ENCODE measurements at regions of chr11 and their contacts with region 1.

Region 1: DNA sequence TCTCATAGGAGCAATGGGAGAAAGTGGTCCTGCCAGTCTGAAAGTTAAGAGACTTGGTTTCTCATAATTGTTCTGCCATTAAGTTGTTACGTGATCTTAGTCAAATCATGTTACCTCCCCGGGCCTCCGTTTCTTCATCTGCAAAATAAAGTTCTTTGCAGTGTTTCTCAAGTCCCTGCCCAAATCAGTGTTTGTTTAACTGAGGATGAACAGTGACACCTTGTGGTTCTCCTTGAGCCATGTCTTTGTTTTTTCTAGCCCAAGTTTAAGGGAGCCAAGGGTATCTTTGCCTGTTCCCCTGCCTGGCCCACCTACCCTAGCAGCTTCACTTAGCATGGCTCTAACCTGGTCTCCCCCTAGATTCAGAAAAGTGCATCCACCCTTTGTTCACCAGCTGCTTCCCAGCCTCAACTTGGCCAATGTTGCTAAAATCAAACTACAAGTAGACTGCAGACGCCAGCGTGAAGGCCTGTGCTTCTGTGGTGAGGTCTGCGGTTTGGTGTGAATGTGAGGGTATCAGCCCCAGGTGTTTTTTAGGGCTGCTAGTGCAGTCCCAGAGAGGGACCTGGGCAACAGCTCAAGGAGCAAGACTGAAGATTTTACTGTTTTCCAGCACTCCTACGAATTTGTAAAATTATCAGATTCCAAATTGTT is 35.5 kb downstream of the FZD4 start:
- DNase-seq: peak in 2 of 5 donors; percentile 6 to 11
- H3K4me3 ChIP-seq: no peak overlapping the region
- H3K4me3 Mint-ChIP-seq: no peak overlapping the region
- H3K27ac ChIP-seq: no peak overlapping the region
- H3K27ac Mint-ChIP-seq: no peak overlapping the region
- H3K4me1 ChIP-seq: peaks cover 6% of the 10 kb centered on the region
- H3K4me1 Mint-ChIP-seq: peaks cover 0 to 8% (median 1%) of the 10 kb centered on the region in 4 donors
- H3K27me3 ChIP-seq: no peaks in the 10 kb centered on the region
- H3K27me3 Mint-ChIP-seq: no peaks in the 10 kb centered on the region

Region 2: DNA sequence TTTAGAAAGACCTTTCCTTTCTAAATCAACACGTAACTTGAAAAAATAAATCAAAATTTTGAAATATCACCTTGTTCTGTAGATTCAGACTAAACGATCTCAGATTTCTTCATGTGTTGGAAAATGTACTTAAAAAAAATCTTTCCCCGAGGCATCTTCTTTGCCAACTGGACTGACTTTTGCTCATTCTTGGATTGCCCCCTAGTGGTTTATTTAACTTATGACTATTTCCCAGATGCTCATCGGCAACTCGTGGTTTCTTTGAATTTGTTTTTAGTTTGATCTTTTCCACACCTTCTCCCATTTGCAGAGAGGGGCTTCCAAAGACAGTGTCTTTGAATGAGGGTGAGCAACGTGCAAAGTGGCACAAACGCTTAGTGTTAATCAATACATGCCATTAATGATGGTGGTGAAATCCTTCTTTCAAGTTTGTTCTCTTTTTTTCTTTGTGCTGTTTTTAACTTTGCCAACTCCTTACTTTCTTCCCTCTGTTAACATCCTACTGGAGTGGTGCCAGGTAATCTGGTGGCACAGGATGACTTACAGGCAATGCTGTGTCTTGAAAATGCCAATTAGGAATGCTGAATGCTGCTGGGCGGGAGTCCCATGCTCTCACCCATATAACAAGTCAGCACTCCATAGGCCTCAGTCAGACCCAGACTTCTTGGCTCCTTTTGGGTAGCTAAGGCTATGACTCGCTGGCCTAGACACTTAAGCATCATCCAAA is 101.1 kb before region 1 on chr11:
- CTCF ChIA-PET with region 1: no interaction called
- POLR2A ChIA-PET with region 1: no interaction called
- intact Hi-C with region 1: no loop called
- DNase-seq: peak in 4 of 5 donors; percentile 31 to 47 (median 40)
- H3K4me3 ChIP-seq: no peak overlapping the region
- H3K4me3 Mint-ChIP-seq: no peak overlapping the region
- H3K27ac ChIP-seq: no peak overlapping the region
- H3K27ac Mint-ChIP-seq: no peak overlapping the region
- H3K4me1 ChIP-seq: no peaks in the 10 kb centered on the region
- H3K4me1 Mint-ChIP-seq: peaks cover 0 to 3% (median 1%) of the 10 kb centered on the region in 4 donors
- H3K27me3 ChIP-seq: no peaks in the 10 kb centered on the region
- H3K27me3 Mint-ChIP-seq: peaks cover 3 to 15% of the 10 kb centered on the region in 2 donors

Region 3: GRCh38 chr11:86869966-86870570 is 49.6 kb before region 1 on chr11:
- CTCF ChIA-PET with region 1: interaction called, 8 read pairs
- POLR2A ChIA-PET with region 1: no interaction called
- intact Hi-C with region 1: loop called (anchors 1 kb)
- DNase-seq: peak in 4 of 5 donors; percentile 6 to 12 (median 10)
- H3K4me3 ChIP-seq: no peak overlapping the region
- H3K4me3 Mint-ChIP-seq: no peak overlapping the region
- H3K27ac ChIP-seq: no peak overlapping the region
- H3K27ac Mint-ChIP-seq: no peak overlapping the region
- H3K4me1 ChIP-seq: no peaks in the 10 kb centered on the region
- H3K4me1 Mint-ChIP-seq: no peaks in the 10 kb centered on the region
- H3K27me3 ChIP-seq: no peaks in the 10 kb centered on the region
- H3K27me3 Mint-ChIP-seq: peaks cover 1 to 2% of the 10 kb centered on the region in 2 donors

Region 4: GRCh38 chr11:86888164-86889000 is 31.3 kb before region 1 on chr11:
- CTCF ChIA-PET with region 1: no interaction called
- POLR2A ChIA-PET with region 1: no interaction called
- intact Hi-C with region 1: no loop called
- DNase-seq: no peak
- H3K4me3 ChIP-seq: no peak overlapping the region
- H3K4me3 Mint-ChIP-seq: no peak overlapping the region
- H3K27ac ChIP-seq: no peak overlapping the region
- H3K27ac Mint-ChIP-seq: no peak overlapping the region
- H3K4me1 ChIP-seq: no peaks in the 10 kb centered on the region
- H3K4me1 Mint-ChIP-seq: no peaks in the 10 kb centered on the region
- H3K27me3 ChIP-seq: peaks cover 4% of the 10 kb centered on the region
- H3K27me3 Mint-ChIP-seq: peaks cover 7 to 19% of the 10 kb centered on the region in 2 donors

Region 5: GRCh38 chr11:87316491-87316890 is 396.8 kb after region 1 on chr11:
- CTCF ChIA-PET with region 1: no interaction called
- POLR2A ChIA-PET with region 1: no interaction called
- intact Hi-C with region 1: no loop called
- DNase-seq: no peak
- H3K4me3 ChIP-seq: no peak overlapping the region
- H3K4me3 Mint-ChIP-seq: no peak overlapping the region
- H3K27ac ChIP-seq: no peak overlapping the region
- H3K27ac Mint-ChIP-seq: no peak overlapping the region
- H3K4me1 ChIP-seq: no peaks in the 10 kb centered on the region
- H3K4me1 Mint-ChIP-seq: no peaks in the 10 kb centered on the region
- H3K27me3 ChIP-seq: no peaks in the 10 kb centered on the region
- H3K27me3 Mint-ChIP-seq: no peaks in the 10 kb centered on the region

Measured in CD4-positive, alpha-beta memory T cell (primary cell).